Dendritic cell treated with granulocyte-macrophage colony-stimulating factor and Interleukin-4, amounts not matched to agents 40 ng/mL and 50 ng/mL, for 4 days (primary cell): ENCODE measurements at regions of chr14 and their contacts with region 1.

Region 1: GRCh38 chr14:49786315-49787110 is 18.6 kb downstream of the KLHDC2 start:
- H3K4me3 Mint-ChIP-seq: no peak overlapping the region
- H3K27ac Mint-ChIP-seq: no peak overlapping the region
- H3K4me1 Mint-ChIP-seq: no peaks in the 10 kb centered on the region
- H3K27me3 Mint-ChIP-seq: no peaks in the 10 kb centered on the region

Region 2: DNA sequence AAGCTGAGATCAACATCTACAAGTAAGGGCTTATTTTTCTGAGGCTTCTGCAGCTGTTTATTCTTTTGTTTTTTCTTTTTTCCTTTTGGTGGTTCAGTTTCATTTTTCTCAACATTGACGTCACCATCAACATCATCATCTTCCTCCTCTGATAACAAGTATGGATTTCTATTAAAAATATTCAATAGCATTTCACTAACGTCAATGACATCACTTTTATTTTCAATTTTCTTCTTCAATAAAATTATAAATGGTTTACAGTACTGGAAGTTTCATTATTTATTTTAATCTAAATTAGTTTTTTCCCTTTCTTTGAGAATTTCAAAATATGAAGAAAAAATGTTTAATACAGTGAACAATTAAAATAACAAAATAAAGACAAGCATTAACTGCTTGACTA is 42.1 kb after region 1 on chr14:
- intact Hi-C with region 1: loop called (anchors 5 kb)
- H3K4me3 Mint-ChIP-seq: no peak overlapping the region
- H3K27ac Mint-ChIP-seq: no peak overlapping the region
- H3K4me1 Mint-ChIP-seq: no peaks in the 10 kb centered on the region
- H3K27me3 Mint-ChIP-seq: no peaks in the 10 kb centered on the region

Region 3: DNA sequence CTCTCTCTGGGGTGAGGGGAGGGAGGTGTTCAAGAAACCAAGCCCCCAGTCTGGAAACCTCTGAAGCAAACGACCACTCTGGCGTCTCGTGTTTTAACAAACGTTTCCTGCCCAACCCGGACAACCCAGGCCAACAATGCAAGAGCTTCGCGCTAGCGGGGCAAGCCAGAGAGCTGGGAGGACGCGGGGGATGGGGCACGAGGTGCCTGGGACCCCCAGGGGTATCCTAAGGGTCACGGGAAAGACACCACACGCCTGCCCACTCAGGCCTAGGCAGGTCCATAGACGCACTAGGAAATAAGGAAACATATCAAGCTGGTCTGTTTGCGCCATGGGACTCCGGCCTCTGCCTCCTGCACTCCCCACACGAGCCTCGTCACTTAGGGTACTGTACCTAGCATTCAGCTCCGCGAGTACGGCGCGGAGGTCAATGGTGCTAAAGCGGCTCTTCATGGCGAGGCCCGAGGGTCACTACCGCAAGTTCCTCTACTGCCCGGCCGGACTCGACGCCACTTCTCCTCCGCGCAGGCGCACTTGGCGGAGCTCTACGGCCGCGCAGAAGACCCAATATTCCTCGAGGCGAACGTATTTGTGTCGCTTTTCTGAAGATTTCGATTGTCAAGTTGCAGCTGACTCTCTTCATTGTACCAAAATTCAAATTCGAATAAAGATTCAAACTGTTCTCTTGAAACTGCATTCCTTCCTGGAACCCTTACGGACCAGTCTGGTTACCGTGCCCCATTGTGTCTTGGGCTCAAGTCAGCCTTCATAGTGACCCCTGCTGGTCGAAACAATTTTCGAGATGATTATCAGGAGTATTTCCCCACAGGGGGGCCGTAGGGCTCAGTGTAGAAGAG is 66.0 kb after region 1 on chr14 and contains the start of gene NEMF:
- intact Hi-C with region 1: no loop called
- H3K4me3 Mint-ChIP-seq: peak within 1 kb of the TSS; percentile 95
- H3K27ac Mint-ChIP-seq: peak within 1 kb of the TSS; percentile 99
- H3K4me1 Mint-ChIP-seq: peaks cover 27% of the 10 kb centered on the region
- H3K27me3 Mint-ChIP-seq: no peaks in the 10 kb centered on the region

Region 4: GRCh38 chr14:49977126-49977841 is 190.8 kb after region 1 on chr14:
- intact Hi-C with region 1: no loop called
- H3K4me3 Mint-ChIP-seq: no peak overlapping the region
- H3K27ac Mint-ChIP-seq: peak overlapping the region; percentile 94
- H3K4me1 Mint-ChIP-seq: peaks cover 74% of the 10 kb centered on the region
- H3K27me3 Mint-ChIP-seq: no peaks in the 10 kb centered on the region